Cardiac septum (tissue), 1 donor: ENCODE measurements at regions of chr6 and their contacts with region 1.

Region 1: DNA sequence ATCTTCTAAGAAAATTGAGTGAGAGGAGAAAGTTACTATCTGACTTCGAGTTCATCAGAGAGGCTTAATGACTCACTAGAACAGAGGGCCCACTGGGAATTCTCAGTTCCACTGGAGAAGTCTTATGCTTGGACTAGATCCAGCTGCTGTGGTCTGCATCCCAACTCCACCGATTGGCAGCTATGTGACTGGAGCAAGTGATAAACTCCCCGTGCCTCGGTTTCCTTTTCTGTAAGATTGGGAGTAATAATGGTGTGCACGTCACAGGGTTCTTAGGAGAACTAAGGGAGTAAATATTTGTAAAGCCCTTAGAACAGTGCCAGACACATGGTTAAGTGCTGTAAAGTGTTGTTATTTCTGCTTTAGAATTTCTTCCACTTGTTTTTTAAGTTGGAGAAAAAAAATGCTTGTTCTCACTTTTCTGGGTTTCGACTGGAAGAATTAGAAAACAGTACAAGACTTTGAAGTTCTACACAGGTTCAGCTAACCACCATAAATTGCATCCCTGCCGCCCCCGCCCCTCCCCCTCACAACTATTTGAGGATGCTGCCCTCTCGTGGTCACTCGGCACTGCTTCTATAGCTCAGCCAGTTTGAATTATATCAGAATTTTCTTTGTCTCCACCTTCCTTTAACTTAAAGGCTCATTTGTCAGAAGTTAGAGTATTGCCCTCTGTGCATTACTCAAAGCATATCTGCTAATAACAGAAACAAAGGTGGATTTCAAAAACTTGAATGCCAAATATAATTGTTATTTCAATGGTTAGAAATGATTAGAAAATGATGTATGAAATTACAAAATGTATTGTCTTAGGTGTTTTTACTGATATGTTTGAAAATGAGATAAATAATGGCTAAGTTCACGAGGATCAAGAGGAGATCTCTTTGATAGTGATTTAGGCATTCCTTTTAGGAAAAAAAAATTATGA is 95.0 kb upstream of the IFNGR1 start:
- DNase-seq: peak; percentile 84

Region 2: GRCh38 chr6:137058037-137058436 is 256.2 kb before region 1 on chr6:
- intact Hi-C with region 1: no loop called
- DNase-seq: no peak

Region 3: GRCh38 chr6:137094411-137095008 is 219.7 kb before region 1 on chr6:
- intact Hi-C with region 1: loop called (anchors 1 kb)
- DNase-seq: no peak

Region 4: DNA sequence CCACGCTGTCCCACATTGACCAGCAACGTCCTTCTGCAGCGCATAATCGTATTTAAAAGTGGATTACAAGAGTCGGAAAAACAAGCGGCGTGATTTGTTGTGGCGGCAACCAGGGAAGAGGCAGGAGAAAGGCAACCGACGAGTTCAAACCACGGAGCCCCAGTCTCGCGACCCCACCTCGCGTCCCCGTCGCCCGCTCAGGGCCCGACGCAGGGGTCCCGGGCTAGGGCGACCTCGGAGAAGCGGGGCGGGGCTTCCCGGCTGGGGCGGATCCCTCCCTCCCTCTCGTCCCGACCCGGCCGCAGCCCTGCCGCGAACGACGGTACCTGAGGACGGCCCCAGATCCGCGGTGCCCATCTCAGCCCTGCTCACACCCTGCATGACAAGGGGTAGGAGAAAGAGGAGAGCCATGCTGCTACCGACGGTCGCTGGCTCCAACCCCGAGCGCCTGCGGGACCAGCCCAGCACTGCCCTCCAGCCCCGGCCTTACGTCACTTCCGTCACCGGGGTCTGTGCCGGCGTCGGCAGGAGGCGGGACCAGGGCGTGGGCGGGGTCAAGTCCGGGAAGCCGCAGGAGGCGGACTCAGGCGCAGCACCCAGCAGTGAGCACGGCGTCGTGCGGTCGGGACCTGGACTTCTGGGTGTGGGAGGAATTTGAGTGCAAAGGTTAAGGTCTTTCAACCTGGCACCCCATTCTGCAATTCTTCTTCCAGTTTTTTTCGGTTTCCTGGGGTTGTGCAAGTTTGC is 95.1 kb before region 1 on chr6 and contains the start of gene IFNGR1:
- intact Hi-C with region 1: loop called (anchors 5 kb)
- DNase-seq: peak; percentile 100
- total RNA-seq, gene IFNGR1: 60.1 TPM

Region 5: DNA sequence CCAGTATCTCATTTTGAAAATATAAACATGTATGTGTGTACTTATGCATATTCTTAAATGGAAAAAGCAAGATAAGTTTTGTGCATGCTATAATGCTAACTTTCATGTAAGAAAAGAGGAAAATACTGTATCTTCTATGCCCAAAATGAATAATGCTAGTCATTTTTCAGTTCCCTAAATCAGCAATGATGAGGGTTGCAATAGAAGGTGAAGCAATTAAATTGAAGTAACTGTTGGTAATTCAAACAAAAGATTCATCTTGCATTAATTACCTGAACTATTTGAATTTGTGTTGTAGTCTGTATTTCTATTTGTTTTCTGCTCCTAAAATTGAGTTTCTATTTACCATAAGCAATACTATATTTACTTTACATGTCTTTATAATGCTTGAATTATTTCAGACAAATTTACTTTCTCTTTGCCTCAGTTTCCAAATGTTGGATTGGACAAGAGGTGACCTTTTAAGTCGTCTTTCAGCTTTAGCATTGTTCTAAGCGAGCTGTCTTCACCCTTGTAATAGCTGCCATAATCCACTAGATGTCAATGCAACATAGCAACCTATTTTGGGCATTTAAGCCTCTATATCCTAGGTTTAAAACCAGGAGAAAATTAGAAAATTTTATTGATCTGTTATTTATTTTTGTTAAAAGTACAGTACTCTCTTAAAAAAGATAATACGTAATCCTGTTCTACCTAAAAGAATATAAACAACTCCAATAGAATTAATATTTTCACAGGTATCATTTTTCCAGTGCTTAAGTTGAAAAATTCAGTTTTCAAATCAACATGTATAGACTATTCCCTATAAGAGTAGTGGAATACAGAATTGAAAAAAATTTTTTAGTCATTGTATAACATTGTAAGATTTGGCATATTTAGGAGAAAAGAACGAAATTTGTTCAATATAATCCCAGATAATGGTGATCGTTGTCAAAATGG is 42.7 kb before region 1 on chr6:
- intact Hi-C with region 1: loop called (anchors 5 kb)
- DNase-seq: no peak